IMR-90 (cell line): ENCODE measurements at regions of chr19 and their contacts with region 1.

Region 1: DNA sequence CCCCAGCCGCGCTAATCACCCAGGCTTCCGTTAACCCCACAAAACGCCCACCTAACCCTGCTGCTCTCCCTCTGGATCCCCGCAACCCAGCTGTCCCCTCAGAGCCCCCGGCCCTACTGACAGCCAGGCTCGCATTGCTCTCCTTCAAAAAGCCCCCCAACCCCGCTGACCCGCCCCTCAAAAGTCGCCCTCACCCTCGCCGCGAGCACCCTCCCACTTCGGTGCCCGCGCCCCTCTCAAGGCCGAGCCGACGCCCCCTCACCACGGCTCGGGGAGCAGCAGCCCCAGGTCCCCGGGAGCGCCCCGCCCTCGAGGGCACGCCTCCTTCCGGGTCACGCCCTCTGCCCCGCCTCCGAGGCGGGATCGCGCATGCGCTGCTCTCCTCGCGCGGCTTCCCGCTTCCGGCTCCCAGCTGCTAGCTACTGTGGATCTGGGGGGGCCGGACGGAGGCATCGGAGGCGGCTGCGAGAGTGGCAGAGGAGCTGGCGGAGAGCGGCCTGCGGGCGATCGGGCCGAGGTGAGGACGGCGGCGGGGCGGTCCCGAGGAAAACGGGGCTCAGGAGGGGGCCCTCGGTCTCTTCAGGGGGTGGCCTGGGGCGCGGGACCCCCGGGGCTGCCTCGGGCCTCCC is 46.1 kb downstream of the ARHGEF18 start:
- DNase-seq: peak; percentile 87
- ATAC-seq: peak; percentile 84
- H3K4me3 ChIP-seq: peak overlapping the region; percentile 86
- H3K27ac ChIP-seq: peak overlapping the region; percentile 43
- H3K4me1 ChIP-seq: peaks cover 6% of the 10 kb centered on the region
- H3K27me3 ChIP-seq: no peaks in the 10 kb centered on the region
- CTCF ChIP-seq: no peak
- POLR2A ChIP-seq: peak; percentile 49
- RAD21 ChIP-seq: no peak

Region 2: DNA sequence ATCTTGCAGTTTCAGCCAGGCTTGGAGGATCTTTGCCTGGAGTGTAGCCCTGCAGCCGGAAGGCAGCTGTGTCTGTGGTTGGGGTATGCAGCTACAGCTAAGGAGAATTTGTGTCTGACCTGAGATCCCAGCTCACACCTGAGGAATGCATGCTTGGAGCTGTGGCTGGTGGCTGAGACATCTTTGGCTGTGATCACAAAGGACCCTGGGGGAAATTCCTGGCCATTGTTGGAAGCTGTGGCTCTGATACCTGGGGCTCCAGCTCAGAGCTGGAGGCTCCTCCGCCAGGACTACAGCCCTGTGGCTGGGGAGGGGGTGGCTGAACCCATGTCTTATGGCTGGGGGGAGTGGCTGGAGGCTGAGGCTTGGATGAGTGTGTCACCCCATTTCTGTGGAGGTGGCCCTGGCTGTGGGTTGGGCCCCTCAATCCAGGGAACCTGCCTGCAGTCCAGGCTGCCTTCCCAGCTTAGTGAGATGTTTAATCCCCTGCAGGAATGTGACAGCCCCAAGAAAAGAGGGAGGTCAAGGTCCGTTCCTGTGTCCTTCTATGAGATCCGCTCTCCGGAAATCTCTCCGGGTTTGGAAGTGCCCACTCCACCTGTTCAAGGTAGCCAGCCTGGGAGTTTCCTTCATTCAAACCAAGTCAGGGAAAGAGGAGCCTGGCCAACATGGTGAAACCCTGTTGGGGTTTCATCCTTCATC is 18.5 kb before region 1 on chr19:
- CTCF ChIA-PET with region 1: interaction called, 3 read pairs
- POLR2A ChIA-PET with region 1: interaction called, 10 read pairs
- dilution Hi-C with region 1: no loop called
- in situ Hi-C with region 1: no loop called
- intact Hi-C with region 1: no loop called
- DNase-seq: no peak
- ATAC-seq: no peak
- H3K4me3 ChIP-seq: no peak overlapping the region
- H3K27ac ChIP-seq: no peak overlapping the region
- H3K4me1 ChIP-seq: no peaks in the 10 kb centered on the region
- H3K27me3 ChIP-seq: no peaks in the 10 kb centered on the region; the same call in 1 of the 2 replicates
- CTCF ChIP-seq: no peak
- POLR2A ChIP-seq: no peak
- RAD21 ChIP-seq: no peak

Region 3: DNA sequence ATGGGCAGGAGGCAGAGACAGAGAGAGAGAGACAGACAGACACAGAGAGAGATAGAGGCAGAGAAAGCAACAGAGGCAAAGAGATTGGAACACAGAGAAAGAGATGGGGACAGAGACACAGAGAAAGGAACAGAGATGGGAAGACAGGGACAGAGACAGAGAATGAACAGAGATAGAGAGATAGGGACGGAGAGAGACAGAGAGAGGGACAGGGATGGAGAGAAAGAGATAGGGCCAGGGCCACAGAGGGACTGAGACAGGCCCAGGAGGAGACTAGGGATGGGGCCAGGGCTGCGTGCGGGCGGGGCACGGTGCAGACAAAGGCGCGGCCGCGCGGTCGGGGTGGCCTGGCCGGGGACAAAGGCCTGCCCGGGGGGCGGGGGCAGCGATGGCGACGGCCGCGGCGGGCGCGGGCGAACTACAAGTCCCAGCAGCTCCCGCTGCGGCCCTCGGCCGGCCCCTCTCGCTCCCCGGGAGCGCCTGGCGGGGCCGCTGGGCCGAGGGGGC is 120.9 kb after region 1 on chr19 and contains the start of gene ZNF358:
- CTCF ChIA-PET with region 1: no interaction called
- POLR2A ChIA-PET with region 1: no interaction called
- dilution Hi-C with region 1: no loop called
- in situ Hi-C with region 1: no loop called
- intact Hi-C with region 1: loop called (anchors 5 kb)
- DNase-seq: peak; percentile 46
- ATAC-seq: peak; percentile 93
- H3K4me3 ChIP-seq: peak within 1 kb of the TSS; percentile 77
- H3K27ac ChIP-seq: peak within 1 kb of the TSS; percentile 100
- H3K4me1 ChIP-seq: peaks cover 15% of the 10 kb centered on the region
- H3K27me3 ChIP-seq: no peaks in the 10 kb centered on the region
- CTCF ChIP-seq: no peak
- POLR2A ChIP-seq: no peak
- RAD21 ChIP-seq: no peak
- total RNA-seq, gene ZNF358: 5.4 and 9.2 TPM in 2 replicates

Region 4: DNA sequence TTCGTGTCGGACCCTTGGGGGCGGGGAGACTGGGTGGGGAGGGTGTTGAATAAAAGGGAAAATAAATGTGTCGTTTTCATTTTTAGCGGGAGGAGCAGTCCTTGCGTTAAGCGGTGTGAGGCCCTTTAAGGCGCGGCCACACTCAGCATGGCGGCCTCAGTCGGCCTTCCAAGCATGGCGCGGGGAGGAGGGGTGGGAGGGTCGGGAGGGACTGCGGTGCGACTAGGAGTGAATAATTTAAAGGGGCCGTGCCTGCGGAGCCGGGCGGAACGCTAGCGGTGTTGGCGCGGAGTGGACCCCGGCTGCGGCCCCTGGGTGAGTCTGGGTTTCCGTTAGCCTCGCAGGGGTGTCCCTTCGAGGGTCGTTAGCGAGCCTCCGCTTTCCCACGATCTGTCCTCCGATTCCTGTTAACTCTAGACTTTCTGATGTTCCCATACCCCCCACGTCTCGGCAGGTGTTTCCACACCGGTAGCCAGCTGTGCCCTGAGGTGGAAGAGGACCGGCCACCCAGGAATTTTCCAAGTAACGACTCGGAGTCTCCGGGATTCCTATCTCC is 139.2 kb after region 1 on chr19:
- CTCF ChIA-PET with region 1: interaction called, 4 read pairs
- POLR2A ChIA-PET with region 1: no interaction called
- dilution Hi-C with region 1: no loop called
- in situ Hi-C with region 1: no loop called
- intact Hi-C with region 1: loop called (anchors 5 kb)
- DNase-seq: peak; percentile 85
- ATAC-seq: peak; percentile 67
- H3K4me3 ChIP-seq: peak overlapping the region; percentile 55
- H3K27ac ChIP-seq: peak overlapping the region; percentile 95
- H3K4me1 ChIP-seq: peaks cover 10% of the 10 kb centered on the region
- H3K27me3 ChIP-seq: no peaks in the 10 kb centered on the region
- CTCF ChIP-seq: no peak
- POLR2A ChIP-seq: no peak
- RAD21 ChIP-seq: no peak